ENCODE measurements at regions of chr4 and their contacts with region 1.

Region 1: DNA sequence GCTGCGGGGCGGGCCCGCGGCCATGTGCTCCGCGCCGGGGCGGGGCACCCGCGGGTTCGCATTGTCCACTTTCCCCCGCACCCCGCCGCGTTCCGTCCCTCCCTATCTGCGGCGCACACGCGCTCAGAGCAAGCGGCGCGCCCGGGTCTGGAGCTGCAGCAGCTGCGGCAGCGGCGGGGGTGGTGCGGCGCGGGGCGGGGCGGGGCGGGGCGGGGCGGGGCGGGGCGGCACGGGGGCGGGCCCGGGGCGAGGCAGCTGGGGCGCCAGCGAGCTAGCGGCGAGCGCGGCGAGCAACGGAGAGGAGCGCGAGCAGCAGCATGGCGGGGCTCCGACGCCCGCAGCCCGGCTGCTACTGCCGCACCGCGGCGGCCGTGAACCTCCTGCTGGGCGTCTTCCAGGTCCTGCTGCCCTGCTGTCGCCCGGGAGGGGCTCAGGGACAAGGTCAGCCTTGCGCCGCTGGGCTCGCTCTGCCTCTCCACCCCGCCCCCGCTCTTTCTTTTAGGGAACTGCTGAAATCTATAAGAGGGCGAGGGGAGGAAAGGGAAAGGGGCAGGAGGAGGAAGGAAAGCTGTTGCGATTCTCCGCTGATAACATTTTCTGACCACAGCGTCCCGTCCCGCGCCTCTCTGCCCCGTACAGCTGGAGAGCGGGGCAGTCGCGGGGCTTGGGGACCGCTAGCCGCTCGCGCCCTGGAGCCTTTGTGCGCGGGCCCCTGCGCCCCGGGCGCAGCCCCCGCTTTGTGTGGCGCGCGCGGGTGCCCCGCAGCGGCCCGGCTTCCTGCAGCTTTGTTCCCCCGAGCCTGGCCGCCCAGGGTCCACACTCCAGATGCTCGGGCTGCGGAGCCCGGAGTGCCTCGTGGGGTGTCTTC is at the start of gene TMEM131L:
- DNase-seq: peak; percentile 63 to 77 (median 69)
- ATAC-seq: peak; percentile 91
- H3K4me3 ChIP-seq: peak within 1 kb of the TSS; percentile 75
- H3K4me3 Mint-ChIP-seq: peak within 1 kb of the TSS; percentile 94 to 100 (median 96)
- H3K27ac ChIP-seq: peak within 1 kb of the TSS; percentile 91
- H3K27ac Mint-ChIP-seq: peak within 1 kb of the TSS; percentile 93 to 99 (median 98)
- H3K4me1 ChIP-seq: peaks cover 29 to 32% of the 10 kb centered on the region in 2 donors
- H3K4me1 Mint-ChIP-seq: peaks cover 32 to 61% (median 44%) of the 10 kb centered on the region in 7 donors
- H3K27me3 ChIP-seq: no peaks in the 10 kb centered on the region
- H3K27me3 Mint-ChIP-seq: no peaks in the 10 kb centered on the region
- total RNA-seq, gene TMEM131L: 45.8 to 111 (median 97.7) TPM

Region 2: GRCh38 chr4:153426207-153426885 is 40.0 kb before region 1 on chr4:
- CTCF ChIA-PET with region 1: interaction called, 5 read pairs
- POLR2A ChIA-PET with region 1: interaction called, 17 read pairs
- intact Hi-C with region 1: loop called in 1 of 2 experiments (anchors 1 kb)
- DNase-seq: peak in 7 of 9 donors; percentile 68 to 89 (median 82)
- ATAC-seq: peak; percentile 88
- H3K4me3 ChIP-seq: peak overlapping the region; percentile 5
- H3K4me3 Mint-ChIP-seq: peak overlapping the region in 9 of 10 donors; percentile 47 to 80 (median 76)
- H3K27ac ChIP-seq: peak overlapping the region; percentile 79
- H3K27ac Mint-ChIP-seq: peak overlapping the region; percentile 88 to 98 (median 96)
- H3K4me1 ChIP-seq: peaks cover 18 to 57% of the 10 kb centered on the region in 2 donors
- H3K4me1 Mint-ChIP-seq: peaks cover 22 to 69% (median 62%) of the 10 kb centered on the region in 7 donors
- H3K27me3 ChIP-seq: no peaks in the 10 kb centered on the region
- H3K27me3 Mint-ChIP-seq: no peaks in the 10 kb centered on the region

Region 3: DNA sequence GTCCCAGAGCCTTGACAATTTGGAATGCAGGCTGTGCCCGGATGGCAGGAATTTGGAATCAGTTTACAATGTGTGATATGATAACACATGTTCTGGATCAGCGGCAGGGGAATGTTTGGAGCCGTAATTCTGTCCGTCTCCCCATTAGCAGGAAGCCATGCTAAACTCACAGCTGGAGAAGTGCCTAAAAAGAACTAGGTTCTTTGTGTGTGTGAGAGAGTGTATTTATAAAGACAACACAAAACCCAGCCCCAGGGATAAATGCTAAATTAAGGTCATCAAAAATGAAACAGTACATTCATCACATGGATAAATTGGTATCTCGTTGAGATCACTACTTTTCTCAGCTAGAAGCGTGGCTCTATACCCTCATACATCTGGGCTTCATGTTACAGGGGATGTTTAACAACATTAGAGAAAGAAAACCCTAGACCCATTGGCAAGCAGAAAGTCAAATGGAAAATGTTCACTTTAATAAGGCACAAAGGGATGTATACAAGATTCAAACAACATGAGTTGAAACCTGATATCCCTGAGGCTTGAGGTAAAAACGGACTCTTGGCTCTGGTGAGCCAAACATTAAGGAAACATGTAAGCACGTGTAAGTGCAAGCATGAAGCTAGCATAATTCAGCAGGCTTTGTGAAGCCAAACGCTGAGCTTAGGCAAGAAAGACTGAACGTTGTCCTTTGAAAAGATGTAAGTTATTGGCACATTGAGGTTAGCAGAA is 18.1 kb before region 1 on chr4:
- CTCF ChIA-PET with region 1: interaction called, 5 read pairs
- POLR2A ChIA-PET with region 1: interaction called, 11 read pairs
- intact Hi-C with region 1: loop called (anchors 1 kb)
- DNase-seq: no peak
- ATAC-seq: no peak
- H3K4me3 ChIP-seq: no peak overlapping the region
- H3K4me3 Mint-ChIP-seq: no peak overlapping the region
- H3K27ac ChIP-seq: no peak overlapping the region
- H3K27ac Mint-ChIP-seq: peak overlapping the region in 2 of 9 donors; percentile 64 to 92
- H3K4me1 ChIP-seq: peaks cover 8 to 16% of the 10 kb centered on the region in 2 donors
- H3K4me1 Mint-ChIP-seq: peaks cover 21 to 44% (median 36%) of the 10 kb centered on the region in 7 donors
- H3K27me3 ChIP-seq: no peaks in the 10 kb centered on the region
- H3K27me3 Mint-ChIP-seq: no peaks in the 10 kb centered on the region

Region 4: GRCh38 chr4:153488006-153488891 is 21.9 kb after region 1 on chr4:
- CTCF ChIA-PET with region 1: interaction called, 12 read pairs
- POLR2A ChIA-PET with region 1: interaction called, 92 read pairs
- intact Hi-C with region 1: loop called (anchors 1 to 2 kb)
- DNase-seq: peak; percentile 51 to 87 (median 79)
- ATAC-seq: peak; percentile 81
- H3K4me3 ChIP-seq: peak overlapping the region; percentile 59
- H3K4me3 Mint-ChIP-seq: peak overlapping the region; percentile 79 to 93 (median 84)
- H3K27ac ChIP-seq: peak overlapping the region; percentile 85
- H3K27ac Mint-ChIP-seq: peak overlapping the region; percentile 87 to 99 (median 95)
- H3K4me1 ChIP-seq: peaks cover 57 to 71% of the 10 kb centered on the region in 2 donors
- H3K4me1 Mint-ChIP-seq: peaks cover 68 to 91% (median 81%) of the 10 kb centered on the region in 7 donors
- H3K27me3 ChIP-seq: no peaks in the 10 kb centered on the region
- H3K27me3 Mint-ChIP-seq: no peaks in the 10 kb centered on the region

Region 5: DNA sequence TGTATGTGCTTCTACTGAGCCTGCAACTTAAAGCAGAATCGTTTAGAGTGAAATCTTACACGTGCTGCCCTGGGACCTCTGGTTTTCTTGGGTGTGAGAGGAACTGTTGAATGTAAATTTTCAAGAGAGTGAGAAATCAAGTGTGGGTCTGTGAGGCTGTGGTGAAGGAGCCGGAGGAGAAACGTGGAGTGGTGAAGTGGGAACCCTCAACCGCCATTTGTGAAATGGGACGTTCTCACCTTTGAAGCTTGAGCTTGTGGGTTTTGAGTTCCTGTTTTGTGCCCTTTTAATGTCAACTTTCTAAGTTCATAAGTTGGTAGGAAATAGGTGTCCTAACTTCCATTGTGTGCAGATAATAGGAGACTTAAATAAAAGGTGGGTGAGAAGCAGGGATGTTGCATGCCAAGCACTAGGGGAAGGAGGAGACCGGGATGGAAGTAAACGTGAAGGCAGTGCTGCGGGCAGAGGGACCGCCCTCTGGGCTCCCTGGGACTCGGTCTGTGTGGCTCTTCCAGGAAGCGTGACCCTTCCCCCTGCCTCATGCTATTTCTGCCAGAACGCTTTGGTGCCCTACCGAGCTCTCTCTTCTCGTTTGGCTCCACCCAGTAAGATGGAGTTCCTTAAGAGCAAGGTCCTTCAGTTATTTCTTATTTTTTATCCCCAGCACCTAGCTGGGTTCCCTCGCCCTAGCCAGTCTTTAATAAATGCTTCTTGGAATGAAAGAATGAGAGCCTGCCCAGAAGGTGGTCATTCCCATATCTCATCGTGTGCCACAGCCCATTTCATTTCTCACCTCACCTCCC is 55.9 kb after region 1 on chr4:
- CTCF ChIA-PET with region 1: interaction called, 3 read pairs
- POLR2A ChIA-PET with region 1: interaction called, 122 read pairs
- intact Hi-C with region 1: loop called (anchors 1 kb)
- DNase-seq: peak in 8 of 9 donors; percentile 52 to 82 (median 78)
- ATAC-seq: peak; percentile 73
- H3K4me3 ChIP-seq: peak overlapping the region; percentile 50
- H3K4me3 Mint-ChIP-seq: peak overlapping the region; percentile 80 to 90 (median 84)
- H3K27ac ChIP-seq: peak overlapping the region; percentile 68
- H3K27ac Mint-ChIP-seq: peak overlapping the region; percentile 88 to 96 (median 93)
- H3K4me1 ChIP-seq: peaks cover 75 to 87% of the 10 kb centered on the region in 2 donors
- H3K4me1 Mint-ChIP-seq: peaks cover 85 to 99% (median 98%) of the 10 kb centered on the region in 7 donors
- H3K27me3 ChIP-seq: no peaks in the 10 kb centered on the region
- H3K27me3 Mint-ChIP-seq: no peaks in the 10 kb centered on the region

Region 6: GRCh38 chr4:153595894-153596601 is 129.7 kb after region 1 on chr4:
- CTCF ChIA-PET with region 1: no interaction called
- POLR2A ChIA-PET with region 1: no interaction called
- intact Hi-C with region 1: no loop called
- DNase-seq: no peak
- ATAC-seq: no peak
- H3K4me3 ChIP-seq: no peak overlapping the region
- H3K4me3 Mint-ChIP-seq: no peak overlapping the region
- H3K27ac ChIP-seq: no peak overlapping the region
- H3K27ac Mint-ChIP-seq: peak overlapping the region in 6 of 9 donors; percentile 22 to 75 (median 61)
- H3K4me1 ChIP-seq: no peaks in the 10 kb centered on the region
- H3K4me1 Mint-ChIP-seq: peaks cover 1 to 16% (median 10%) of the 10 kb centered on the region in 7 donors
- H3K27me3 ChIP-seq: no peaks in the 10 kb centered on the region
- H3K27me3 Mint-ChIP-seq: no peaks in the 10 kb centered on the region

Region 7: DNA sequence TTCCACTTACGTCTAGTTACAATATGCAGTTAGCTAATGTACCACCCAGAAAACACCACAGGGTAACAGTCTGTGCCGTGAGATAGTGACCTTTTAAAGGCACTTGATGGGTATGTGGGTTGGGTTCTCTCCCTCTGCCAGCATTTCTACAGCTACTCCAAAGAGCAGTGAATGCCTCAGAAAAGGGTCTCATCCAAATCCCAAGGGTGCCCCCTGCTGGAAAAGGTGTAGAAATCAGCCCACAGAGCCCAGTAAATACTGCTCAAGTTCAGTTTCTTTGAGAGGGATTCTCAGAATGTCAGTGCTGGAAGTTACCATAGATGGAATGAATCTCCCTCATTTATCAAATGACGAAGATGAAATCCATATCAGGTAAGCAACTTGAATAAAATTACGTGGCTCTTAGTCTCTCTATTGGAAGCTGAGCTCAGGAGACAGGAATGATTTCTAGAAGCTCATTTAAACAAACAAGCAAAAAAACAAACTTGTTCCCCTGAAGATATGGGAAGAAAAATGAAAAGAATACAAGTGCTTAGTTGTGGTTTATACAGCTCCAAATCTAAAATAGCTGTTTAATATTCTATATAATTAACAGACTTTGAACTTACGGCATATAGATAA is 284.0 kb after region 1 on chr4:
- CTCF ChIA-PET with region 1: no interaction called
- POLR2A ChIA-PET with region 1: no interaction called
- intact Hi-C with region 1: loop called in 1 of 2 experiments (anchors 10 kb)
- DNase-seq: peak; percentile 37 to 78 (median 64)
- ATAC-seq: peak; percentile 82
- H3K4me3 ChIP-seq: no peak overlapping the region
- H3K4me3 Mint-ChIP-seq: no peak overlapping the region
- H3K27ac ChIP-seq: no peak overlapping the region
- H3K27ac Mint-ChIP-seq: peak overlapping the region in 2 of 9 donors; percentile 26 to 45
- H3K4me1 ChIP-seq: peaks cover 0 to 12% of the 10 kb centered on the region in 2 donors
- H3K4me1 Mint-ChIP-seq: peaks cover 4 to 31% (median 17%) of the 10 kb centered on the region in 7 donors
- H3K27me3 ChIP-seq: no peaks in the 10 kb centered on the region
- H3K27me3 Mint-ChIP-seq: peaks cover 0 to 32% (median 0%) of the 10 kb centered on the region in 5 donors